ENCODE measurements at regions of chr15 and their contacts with region 1.

Region 1: GRCh38 chr15:23472678-23473077 is 25.6 kb upstream of the GOLGA6L2 start:
- DNase-seq: no peak
- ATAC-seq: no peak
- H3K4me3 ChIP-seq: no peak overlapping the region
- H3K27ac ChIP-seq: no peak overlapping the region
- H3K4me1 ChIP-seq: no peaks in the 10 kb centered on the region
- H3K27me3 ChIP-seq: peaks cover 0 to 3% (median 0%) of the 10 kb centered on the region in 9 donors
- CTCF ChIP-seq: no peak
- POLR2A ChIP-seq: no peak

Region 2: GRCh38 chr15:23457890-23458289 is 14.8 kb before region 1 on chr15:
- intact Hi-C with region 1: loop called in 1 of 10 experiments (anchors 2 kb)
- DNase-seq: no peak
- ATAC-seq: no peak
- H3K4me3 ChIP-seq: no peak overlapping the region
- H3K27ac ChIP-seq: no peak overlapping the region
- H3K4me1 ChIP-seq: no peaks in the 10 kb centered on the region
- H3K27me3 ChIP-seq: no peaks in the 10 kb centered on the region
- CTCF ChIP-seq: no peak
- POLR2A ChIP-seq: no peak